ENCODE measurements at regions of chr11 and their contacts with region 1.

Region 1: GRCh38 chr11:8839957-8840945 is 70.7 kb upstream of the AKIP1 start:
- DNase-seq: peak in 1 of 2 donors; percentile 36
- ATAC-seq: peak in 6 of 8 donors; percentile 15 to 69 (median 62)
- H3K4me3 ChIP-seq: no peak overlapping the region
- H3K27ac ChIP-seq: peak overlapping the region in 9 of 10 donors; percentile 28 to 84 (median 60)
- H3K4me1 ChIP-seq: peaks cover 0 to 40% (median 33%) of the 10 kb centered on the region in 9 donors
- H3K27me3 ChIP-seq: no peaks in the 10 kb centered on the region
- CTCF ChIP-seq: no peak

Region 2: GRCh38 chr11:8768625-8769333 is 71.5 kb before region 1 on chr11:
- intact Hi-C with region 1: no loop called
- DNase-seq: peak; percentile 53 to 74
- ATAC-seq: peak; percentile 70 to 94 (median 86)
- H3K4me3 ChIP-seq: no peak overlapping the region
- H3K27ac ChIP-seq: peak overlapping the region; percentile 31 to 83 (median 70)
- H3K4me1 ChIP-seq: peaks cover 22 to 96% (median 58%) of the 10 kb centered on the region in 9 donors
- H3K27me3 ChIP-seq: no peaks in the 10 kb centered on the region
- CTCF ChIP-seq: peak in 5 of 9 donors; percentile 2 to 51 (median 34)

Region 3: DNA sequence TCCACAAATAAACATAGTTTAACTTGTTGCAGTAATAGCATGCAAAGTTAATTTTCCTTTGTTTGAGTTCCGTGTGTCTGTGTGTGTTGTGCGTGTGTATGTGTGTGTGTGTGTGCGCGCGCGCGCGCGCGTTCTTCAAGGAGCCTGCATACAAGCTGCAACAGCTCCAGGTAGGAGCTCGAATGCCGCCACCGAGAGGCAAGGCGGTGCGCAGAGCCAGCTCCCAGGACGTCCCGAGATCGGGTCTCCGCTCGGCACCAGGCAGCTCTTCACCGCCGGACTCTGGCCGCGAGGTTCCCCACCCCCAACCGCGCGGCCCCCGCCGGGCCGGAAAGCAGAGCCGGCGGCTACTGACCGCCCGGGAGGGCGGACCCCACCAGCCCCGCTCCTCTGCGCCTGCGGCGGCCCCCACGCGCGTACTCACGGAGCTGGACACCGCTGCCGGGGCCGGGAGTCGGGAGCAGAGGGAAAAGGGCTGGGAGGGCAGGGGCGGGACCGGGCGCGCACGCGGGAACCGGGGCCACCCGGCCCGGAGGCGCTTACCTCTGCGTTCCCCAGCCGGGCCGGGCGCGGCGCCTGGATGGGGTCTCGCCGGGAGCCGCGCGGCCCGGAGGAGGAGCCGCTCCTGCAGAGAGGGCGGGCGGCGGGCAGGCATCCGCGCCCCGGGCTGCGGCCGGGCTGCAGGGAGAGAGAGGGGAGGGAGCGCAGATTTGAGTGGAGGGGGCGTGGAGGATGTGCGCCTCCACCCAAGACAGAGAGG is 30.3 kb after region 1 on chr11:
- intact Hi-C with region 1: loop called in 1 of 10 experiments (anchors 5 kb)
- DNase-seq: peak; percentile 59
- ATAC-seq: peak; percentile 80 to 90 (median 82)
- H3K4me3 ChIP-seq: peak overlapping the region; percentile 59 to 96 (median 86)
- H3K27ac ChIP-seq: peak overlapping the region; percentile 63 to 93 (median 86)
- H3K4me1 ChIP-seq: peaks cover 0 to 73% (median 32%) of the 10 kb centered on the region in 9 donors
- H3K27me3 ChIP-seq: peaks cover 0 to 38% (median 0%) of the 10 kb centered on the region in 7 donors
- CTCF ChIP-seq: no peak

Region 4: DNA sequence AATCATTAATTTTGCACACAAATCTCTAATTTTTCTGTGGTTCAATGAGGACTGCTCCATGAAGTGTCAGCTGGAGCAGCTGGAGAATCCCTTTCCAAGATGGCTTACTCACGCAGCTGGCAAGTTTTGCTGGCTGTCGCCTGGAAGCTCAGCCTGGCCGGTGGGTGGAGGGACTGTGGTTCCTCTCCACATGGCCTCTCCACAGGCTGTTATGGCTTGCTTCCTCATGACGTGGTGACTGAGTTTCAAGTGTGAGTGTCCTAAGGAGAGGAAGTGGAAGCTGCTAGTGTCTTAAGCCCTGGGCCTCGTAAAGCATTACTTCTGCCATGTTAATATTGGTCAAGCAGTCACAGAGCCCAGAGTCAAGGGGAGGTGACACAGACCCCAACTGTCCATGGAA is 177.5 kb after region 1 on chr11:
- intact Hi-C with region 1: no loop called
- DNase-seq: peak; percentile 62 to 66
- ATAC-seq: peak; percentile 75 to 91 (median 86)
- H3K4me3 ChIP-seq: no peak overlapping the region
- H3K27ac ChIP-seq: peak overlapping the region in 3 of 10 donors; percentile 25 to 69 (median 42)
- H3K4me1 ChIP-seq: peaks cover 0 to 44% (median 28%) of the 10 kb centered on the region in 9 donors
- H3K27me3 ChIP-seq: no peaks in the 10 kb centered on the region
- CTCF ChIP-seq: no peak

Measured in heart right ventricle (tissue), 16 donors.